ENCODE measurements at regions of chr1 and their contacts with region 1.

Region 1: DNA sequence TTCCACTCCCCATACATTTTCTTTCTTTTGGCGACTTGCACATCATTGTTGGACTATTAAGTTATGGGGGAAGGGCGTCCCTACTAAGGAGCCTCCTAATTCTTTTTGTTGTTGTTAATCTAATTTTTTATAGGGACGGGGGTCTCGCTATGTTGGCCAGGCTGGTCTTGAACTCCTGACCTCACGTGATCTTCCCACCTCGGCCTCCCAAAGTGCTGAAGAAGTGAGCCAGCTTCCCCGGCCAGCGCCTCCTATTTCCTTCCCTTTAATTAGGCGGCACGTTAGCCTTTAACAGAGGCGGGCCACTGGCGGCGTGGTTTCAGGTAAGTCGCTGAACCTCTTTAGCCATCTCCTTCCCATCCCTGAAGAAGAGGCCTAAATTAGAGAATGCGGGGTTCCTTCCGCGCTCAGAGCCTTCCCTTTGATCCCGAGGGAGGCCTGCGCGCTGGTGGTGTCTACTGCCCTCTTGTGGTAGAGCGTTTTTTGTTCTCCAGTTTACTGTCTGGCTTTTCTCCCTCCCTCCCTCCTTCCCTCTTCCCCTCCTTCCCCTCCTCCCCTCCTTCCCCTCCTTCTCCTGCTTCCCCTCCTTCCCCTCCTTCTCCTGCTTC is 38.1 kb downstream of the TNFRSF9 start:
- DNase-seq: peak; percentile 46 to 70 (median 68)
- ATAC-seq: peak; percentile 84 to 90
- H3K4me3 ChIP-seq: no peak overlapping the region
- H3K27ac ChIP-seq: no peak overlapping the region
- H3K4me1 ChIP-seq: no peaks in the 10 kb centered on the region
- H3K27me3 ChIP-seq: no peaks in the 10 kb centered on the region

Region 2: GRCh38 chr1:6971048-6971447 is 931.5 kb before region 1 on chr1:
- intact Hi-C with region 1: no loop called
- DNase-seq: no peak
- ATAC-seq: no peak
- H3K4me3 ChIP-seq: no peak overlapping the region
- H3K27ac ChIP-seq: no peak overlapping the region
- H3K4me1 ChIP-seq: no peaks in the 10 kb centered on the region
- H3K27me3 ChIP-seq: no peaks in the 10 kb centered on the region

Region 3: GRCh38 chr1:7808253-7808844 is 94.2 kb before region 1 on chr1:
- intact Hi-C with region 1: loop called in 1 of 4 experiments (anchors 10 kb)
- DNase-seq: no peak
- ATAC-seq: no peak
- H3K4me3 ChIP-seq: no peak overlapping the region
- H3K27ac ChIP-seq: no peak overlapping the region
- H3K4me1 ChIP-seq: no peaks in the 10 kb centered on the region
- H3K27me3 ChIP-seq: no peaks in the 10 kb centered on the region

Region 4: GRCh38 chr1:7856345-7856744 is 46.2 kb before region 1 on chr1:
- intact Hi-C with region 1: no loop called
- DNase-seq: peak in 1 of 3 donors; percentile 51
- ATAC-seq: no peak
- H3K4me3 ChIP-seq: no peak overlapping the region
- H3K27ac ChIP-seq: no peak overlapping the region
- H3K4me1 ChIP-seq: no peaks in the 10 kb centered on the region
- H3K27me3 ChIP-seq: no peaks in the 10 kb centered on the region

Region 5: DNA sequence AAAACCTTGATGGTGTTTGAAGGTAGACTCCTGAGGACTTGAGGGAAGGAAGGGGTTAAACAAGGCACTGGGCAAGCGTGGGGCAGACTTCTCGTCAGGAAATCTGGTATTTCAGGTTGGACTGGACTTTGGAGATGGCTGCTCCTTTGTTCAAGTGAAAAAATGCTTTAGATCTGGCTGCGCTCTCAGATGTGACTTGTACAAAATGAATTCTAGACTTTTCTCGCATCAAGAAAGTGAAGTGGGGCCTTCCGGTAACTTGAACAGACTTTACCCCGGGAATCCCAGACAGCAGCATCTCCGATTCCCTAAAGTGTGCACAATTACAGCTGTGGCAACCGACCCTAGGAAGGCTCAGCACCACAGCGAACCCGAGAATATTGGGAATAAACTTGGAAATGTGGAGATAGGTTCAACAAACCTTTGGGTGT is 167.8 kb after region 1 on chr1:
- intact Hi-C with region 1: no loop called
- DNase-seq: no peak
- ATAC-seq: no peak
- H3K4me3 ChIP-seq: no peak overlapping the region
- H3K27ac ChIP-seq: no peak overlapping the region
- H3K4me1 ChIP-seq: no peaks in the 10 kb centered on the region
- H3K27me3 ChIP-seq: no peaks in the 10 kb centered on the region

Measured in right cardiac atrium (tissue), 5 donors.